ENCODE measurements at regions of chr12 and their contacts with region 1.

Region 1: DNA sequence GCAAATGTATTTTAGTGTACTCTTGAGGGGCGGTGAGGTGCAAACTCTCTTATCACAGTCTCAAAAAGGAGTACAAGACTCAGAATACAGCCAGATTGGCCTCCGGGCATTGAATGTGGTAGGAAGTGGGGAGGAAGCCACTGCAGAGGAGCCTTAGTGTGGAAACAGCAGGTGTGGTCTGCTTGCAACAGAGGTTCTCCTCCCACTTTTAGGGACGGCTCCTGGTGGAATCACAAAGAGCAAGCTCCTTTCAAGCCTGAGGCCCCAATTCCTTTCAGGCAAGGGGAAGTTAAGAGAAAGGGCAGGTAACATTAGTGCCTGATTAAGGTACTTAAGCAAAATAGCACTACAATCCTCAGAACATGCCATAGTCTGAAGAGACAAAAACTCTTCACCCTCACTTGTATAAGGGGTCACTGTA is 23.7 kb upstream of the SLC2A3 start:
- DNase-seq: peak in 1 of 2 experiments; percentile 74
- H3K4me3 ChIP-seq: peak overlapping the region; percentile 11 to 63 (median 41); a peak in 5 of 8 replicates
- H3K27ac ChIP-seq: peak overlapping the region; percentile 57; the same call in 1 of the 2 replicates
- H3K4me1 ChIP-seq: peaks cover 0 to 6% (median 3%) of the 10 kb centered on the region in 4 experiments; a peak in 6 of 7 replicates
- H3K27me3 ChIP-seq: no peaks in the 10 kb centered on the region
- CTCF ChIP-seq: no peak
- EP300 ChIP-seq: no peak
- POLR2A ChIP-seq: 0 out of 3 replicates have a peak, but pooled peaks of 1 of the 2 experiments have one; percentile 31
- RAD21 ChIP-seq: peak in 1 of 2 experiments; percentile 4; a peak in 1 of 4 replicates

Region 2: DNA sequence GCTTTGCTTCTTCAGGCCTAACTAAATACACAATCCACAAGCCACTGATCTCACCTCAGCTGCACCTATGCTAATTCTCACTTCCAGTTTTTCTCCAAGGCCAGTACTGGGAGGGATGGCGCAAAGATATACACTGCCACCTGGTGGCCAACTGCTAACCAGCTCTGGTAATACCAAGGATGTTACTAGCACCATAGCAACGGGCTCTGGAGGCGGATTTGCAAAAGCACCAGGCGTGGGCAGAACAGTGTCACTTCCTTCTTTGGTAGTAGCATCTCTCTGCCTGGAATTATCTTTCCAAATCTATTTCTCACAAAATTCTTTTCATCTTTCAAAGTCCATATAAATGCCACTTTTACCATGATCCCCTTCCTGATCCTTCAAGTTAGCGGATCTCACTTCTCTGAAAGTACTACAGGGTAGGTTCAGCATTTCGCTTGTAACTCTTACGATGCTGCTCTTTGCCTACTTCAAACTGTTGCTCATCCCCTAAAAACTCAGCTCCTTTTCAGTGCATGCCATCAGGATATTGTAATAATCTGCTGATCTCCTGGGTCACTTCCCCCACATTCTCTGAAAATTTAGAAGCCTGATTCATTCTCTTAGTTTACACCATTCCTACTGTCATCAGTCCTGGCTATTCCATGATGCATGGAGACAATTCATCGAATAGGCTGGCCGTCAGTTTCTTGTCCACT is 35.7 kb after region 1 on chr12:
- CTCF ChIA-PET with region 1: interaction called, 16 read pairs
- POLR2A ChIA-PET with region 1: interaction called, 19 read pairs
- DNase-seq: peak; percentile 38 to 74
- H3K4me3 ChIP-seq: no peak overlapping the region
- H3K27ac ChIP-seq: no peak overlapping the region
- H3K4me1 ChIP-seq: peaks cover 0 to 6% (median 2%) of the 10 kb centered on the region in 4 experiments; a peak in 5 of 7 replicates
- H3K27me3 ChIP-seq: no peaks in the 10 kb centered on the region
- CTCF ChIP-seq: peak; percentile 52 to 85 (median 75)
- EP300 ChIP-seq: no peak
- POLR2A ChIP-seq: no peak
- RAD21 ChIP-seq: peak; percentile 81

Region 3: DNA sequence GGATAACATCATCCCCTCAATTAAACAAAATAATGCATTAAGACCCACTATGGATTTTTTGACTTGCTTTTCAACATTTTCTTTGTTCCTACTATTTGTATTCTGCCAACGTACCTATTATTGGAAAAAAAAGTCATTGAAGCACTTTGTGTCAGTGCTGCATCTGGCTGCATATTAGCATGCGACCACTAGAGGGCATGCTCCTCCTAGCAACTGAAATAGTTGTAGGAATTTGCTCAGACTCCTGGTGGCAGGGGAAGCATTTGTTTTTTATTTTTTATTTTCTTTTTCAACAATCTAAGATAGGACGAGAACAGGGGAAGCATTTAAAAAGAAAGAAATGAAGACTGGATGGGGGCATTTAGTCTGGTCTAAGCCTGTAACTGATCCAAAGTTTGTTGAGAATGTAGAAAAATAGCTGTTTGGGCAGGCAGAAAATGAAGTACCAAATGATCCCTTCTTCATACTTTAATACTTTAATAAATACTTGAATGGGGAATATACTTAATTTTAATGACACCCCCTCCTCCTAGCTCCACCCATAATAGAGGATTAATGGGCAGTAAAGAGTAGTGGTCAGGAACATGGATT is 149.2 kb after region 1 on chr12:
- CTCF ChIA-PET with region 1: no interaction called
- POLR2A ChIA-PET with region 1: no interaction called
- DNase-seq: peak; percentile 23 to 86
- H3K4me3 ChIP-seq: no peak overlapping the region
- H3K27ac ChIP-seq: no peak overlapping the region
- H3K4me1 ChIP-seq: no peaks in the 10 kb centered on the region
- H3K27me3 ChIP-seq: no peaks in the 10 kb centered on the region
- CTCF ChIP-seq: peak; percentile 15 to 99 (median 94)
- EP300 ChIP-seq: no peak
- POLR2A ChIP-seq: no peak
- RAD21 ChIP-seq: peak; percentile 99

Measured in H1 (cell line).